Activated T-helper 1 cell treated with anti-CD3 and anti-CD28 coated beads, Interleukin-12 subunit alpha, Interleukin-12 subunit beta, Interleukin-2, Interleukin-4 antibody, amounts not matched to agents 30 ng/mL and 10 ng/mL and 1 ng/mL, durations not matched to agents 14 hours and 24 hours and 36 hours (primary cell): ENCODE measurements at regions of chr1 and their contacts with region 1.

Region 1: DNA sequence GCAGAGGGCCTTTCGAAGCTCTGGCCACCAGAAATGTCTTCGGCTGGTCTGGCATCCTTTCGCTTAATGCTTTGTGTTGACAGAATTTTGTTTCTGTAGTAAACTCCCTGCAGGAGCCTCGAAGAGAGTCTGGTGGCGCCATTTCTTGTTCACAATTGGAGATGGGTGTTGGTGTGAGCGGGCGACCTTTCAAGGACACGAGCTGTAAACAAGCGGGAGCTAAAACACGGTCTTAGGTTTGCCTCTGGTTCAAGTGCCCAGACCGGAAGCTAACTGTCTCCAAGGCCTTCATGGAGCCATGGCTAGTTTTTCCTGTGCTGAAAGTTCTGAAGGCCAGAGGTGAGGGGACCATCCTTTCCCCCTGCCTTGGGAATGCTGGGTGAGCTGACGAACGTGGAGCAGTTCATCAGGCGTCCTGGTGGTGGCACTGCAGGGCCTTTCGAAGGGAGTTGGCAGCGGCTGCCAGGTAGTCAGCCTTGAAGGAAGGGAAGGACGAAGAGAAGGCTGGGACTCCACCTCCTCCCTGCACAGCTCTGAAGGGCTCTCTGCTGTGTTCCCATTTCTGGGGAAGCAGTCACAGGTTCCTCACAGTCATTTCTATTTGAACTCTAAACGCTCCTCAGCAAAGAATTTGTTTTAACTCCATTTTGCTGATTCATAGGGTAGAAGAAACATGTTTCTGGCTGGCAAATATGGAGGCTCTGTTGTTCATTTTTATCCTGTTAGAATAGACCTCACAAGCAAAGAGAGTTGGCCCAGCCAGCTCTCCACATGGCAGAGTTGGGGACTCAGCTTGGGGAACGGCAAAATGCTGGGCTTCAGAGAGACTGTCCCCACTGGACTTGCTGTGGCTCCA is 35.2 kb downstream of the URB2 start:
- DNase-seq: peak; percentile 49
- H3K4me3 Mint-ChIP-seq: no peak overlapping the region
- H3K27ac Mint-ChIP-seq: no peak overlapping the region
- H3K4me1 Mint-ChIP-seq: peaks cover 21% of the 10 kb centered on the region
- H3K27me3 Mint-ChIP-seq: no peaks in the 10 kb centered on the region

Region 2: GRCh38 chr1:229693129-229693900 is 32.1 kb after region 1 on chr1:
- intact Hi-C with region 1: loop called (anchors 2 kb)
- DNase-seq: no peak
- H3K4me3 Mint-ChIP-seq: no peak overlapping the region
- H3K27ac Mint-ChIP-seq: no peak overlapping the region
- H3K4me1 Mint-ChIP-seq: peaks cover 29% of the 10 kb centered on the region
- H3K27me3 Mint-ChIP-seq: peaks cover 4% of the 10 kb centered on the region

Region 3: DNA sequence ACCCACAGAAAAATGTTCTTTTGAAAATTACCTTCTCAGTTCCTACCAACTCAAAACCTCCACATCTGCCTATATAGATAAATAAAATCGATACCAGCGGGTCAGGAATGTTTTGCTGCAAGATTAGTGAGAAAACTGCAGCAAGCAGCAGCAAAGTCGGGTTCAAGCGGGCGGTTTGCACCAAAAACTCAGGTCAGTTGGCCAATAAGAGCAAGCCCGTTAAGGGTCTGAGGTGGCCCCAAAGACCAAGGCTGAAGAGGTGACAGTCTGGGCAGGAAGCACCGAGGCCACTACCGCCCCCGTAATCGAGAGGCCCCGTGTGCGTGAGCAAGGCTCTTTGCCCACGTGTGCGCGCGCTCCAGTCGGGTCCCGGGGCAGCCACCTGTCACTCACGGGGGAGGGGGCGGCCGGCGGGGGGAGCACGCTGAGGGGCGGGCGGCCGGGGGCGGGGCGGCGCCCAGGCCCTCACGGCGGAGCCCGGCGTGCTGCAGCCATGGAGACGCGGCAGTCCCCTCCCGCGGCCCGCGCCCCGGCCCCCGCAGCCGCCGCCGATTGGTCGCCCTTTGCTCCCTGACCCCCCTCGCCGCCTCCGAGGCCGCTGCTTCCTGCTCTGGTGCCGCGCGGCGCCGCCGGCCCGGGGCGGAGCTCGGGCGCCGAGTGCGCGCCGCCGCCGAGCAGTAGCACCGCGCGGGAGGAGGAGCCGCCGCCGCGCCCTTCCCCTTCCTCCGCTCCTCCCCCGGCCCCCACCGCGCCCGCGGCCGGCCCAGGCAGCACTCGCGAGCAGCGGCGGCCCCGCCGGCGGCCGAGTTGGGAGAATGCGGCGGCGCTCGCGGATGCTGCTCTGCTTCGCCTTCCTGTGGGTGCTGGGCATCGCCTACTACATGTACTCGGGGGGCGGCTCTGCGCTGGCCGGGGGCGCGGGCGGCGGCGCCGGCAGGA is 405.5 kb after region 1 on chr1 and contains the start of gene GALNT2:
- intact Hi-C with region 1: loop called (anchors 1 kb)
- DNase-seq: peak; percentile 88
- H3K4me3 Mint-ChIP-seq: peak within 1 kb of the TSS; percentile 93
- H3K27ac Mint-ChIP-seq: peak within 1 kb of the TSS; percentile 89
- H3K4me1 Mint-ChIP-seq: peaks cover 48% of the 10 kb centered on the region
- H3K27me3 Mint-ChIP-seq: peaks cover 3% of the 10 kb centered on the region
- total RNA-seq, gene GALNT2: 67.6 and 67.9 TPM in 2 replicates

Region 4: DNA sequence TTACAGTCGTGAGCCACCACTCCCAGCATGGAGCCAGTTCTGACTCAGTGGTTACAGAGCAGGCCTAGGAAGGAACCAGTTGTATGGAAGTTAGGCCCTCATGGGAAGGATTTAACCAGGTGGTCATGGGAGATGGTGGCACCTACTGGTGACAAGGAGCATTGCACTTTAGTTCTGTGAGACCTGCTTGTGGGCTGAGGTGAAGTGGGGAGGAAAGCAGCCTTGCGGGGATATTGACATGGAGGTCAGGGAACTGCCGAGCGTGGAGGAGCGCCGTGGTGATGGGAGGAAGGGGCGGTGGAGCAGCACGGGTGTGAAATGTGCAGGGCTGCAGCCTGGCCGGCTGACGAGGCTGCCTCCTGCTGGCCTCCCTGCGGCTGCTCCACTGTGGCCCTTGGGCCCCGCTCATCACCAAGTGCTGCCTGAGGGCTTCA is 506.2 kb after region 1 on chr1:
- intact Hi-C with region 1: loop called (anchors 1 kb)
- DNase-seq: peak; percentile 12
- H3K4me3 Mint-ChIP-seq: no peak overlapping the region
- H3K27ac Mint-ChIP-seq: no peak overlapping the region
- H3K4me1 Mint-ChIP-seq: peaks cover 39% of the 10 kb centered on the region
- H3K27me3 Mint-ChIP-seq: no peaks in the 10 kb centered on the region

Region 5: DNA sequence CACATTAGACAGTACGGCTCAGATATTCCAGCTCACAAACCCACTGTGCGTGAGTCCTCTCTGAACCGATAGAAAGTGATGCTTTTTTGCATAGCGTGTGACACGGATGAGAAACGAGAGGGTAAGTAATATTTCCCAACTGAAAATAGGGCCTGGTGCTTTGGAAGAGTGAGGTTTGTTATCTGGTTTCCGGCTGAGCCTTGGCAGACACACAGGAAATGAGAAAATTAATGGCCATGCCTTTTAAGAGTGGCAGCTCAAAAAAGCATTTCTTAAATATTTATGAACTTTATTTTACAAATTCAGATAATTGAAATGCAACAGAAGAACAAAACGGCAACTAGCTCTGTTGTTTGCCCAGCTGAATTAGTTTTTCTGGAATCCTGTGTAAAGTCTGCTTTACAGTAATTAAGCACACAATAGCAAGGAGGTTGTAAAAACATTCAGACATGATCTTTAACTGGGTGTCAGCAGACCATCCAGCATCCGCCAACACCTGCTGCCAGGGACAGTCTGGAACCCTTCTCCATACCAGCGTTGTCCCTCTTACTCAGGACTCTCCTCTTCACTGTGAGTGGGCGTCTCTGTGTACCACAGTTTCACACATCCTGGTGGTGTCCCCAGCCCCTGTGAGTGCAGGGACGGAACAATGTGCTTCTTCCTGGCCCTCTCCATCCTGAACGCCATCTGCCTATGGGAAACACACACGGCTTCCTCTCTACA is 609.5 kb after region 1 on chr1:
- intact Hi-C with region 1: loop called (anchors 5 kb)
- DNase-seq: no peak
- H3K4me3 Mint-ChIP-seq: no peak overlapping the region
- H3K27ac Mint-ChIP-seq: peak overlapping the region; percentile 89
- H3K4me1 Mint-ChIP-seq: peaks cover 28% of the 10 kb centered on the region
- H3K27me3 Mint-ChIP-seq: no peaks in the 10 kb centered on the region